Breast epithelium (tissue), 4 donors: ENCODE measurements at regions of chrX and their contacts with region 1.

Region 1: GRCh38 chrX:8125566-8125965 is 45.5 kb downstream of the VCX2 start:
- DNase-seq: no peak
- H3K4me3 ChIP-seq: no peak overlapping the region
- H3K27ac ChIP-seq: no peak overlapping the region
- H3K4me1 ChIP-seq: no peaks in the 10 kb centered on the region
- H3K27me3 ChIP-seq: peaks cover 0 to 3% of the 10 kb centered on the region in 2 donors
- CTCF ChIP-seq: no peak
- POLR2A ChIP-seq: no peak

Region 2: GRCh38 chrX:7872042-7872441 is 253.5 kb before region 1 on chrX:
- intact Hi-C with region 1: no loop called
- DNase-seq: no peak
- H3K4me3 ChIP-seq: no peak overlapping the region
- H3K27ac ChIP-seq: no peak overlapping the region
- H3K4me1 ChIP-seq: no peaks in the 10 kb centered on the region
- H3K27me3 ChIP-seq: peaks cover 0 to 13% of the 10 kb centered on the region in 2 donors
- CTCF ChIP-seq: no peak
- POLR2A ChIP-seq: no peak

Region 3: GRCh38 chrX:8084006-8084405 is 41.6 kb before region 1 on chrX:
- intact Hi-C with region 1: loop called (anchors 2 kb)
- DNase-seq: no peak
- H3K4me3 ChIP-seq: no peak overlapping the region
- H3K27ac ChIP-seq: no peak overlapping the region
- H3K4me1 ChIP-seq: no peaks in the 10 kb centered on the region
- H3K27me3 ChIP-seq: no peaks in the 10 kb centered on the region
- CTCF ChIP-seq: no peak
- POLR2A ChIP-seq: no peak